ENCODE measurements at regions of chr20 and their contacts with region 1.

Region 1: GRCh38 chr20:8361006-8361652 is 229.1 kb downstream of the PLCB1 start:
- DNase-seq: no peak
- ATAC-seq: 0 out of 3 replicates have a peak, but pooled peaks have one; percentile 16
- H3K4me3 ChIP-seq: no peak overlapping the region
- H3K27ac ChIP-seq: no peak overlapping the region
- H3K4me1 ChIP-seq: peaks cover 35% of the 10 kb centered on the region
- H3K27me3 ChIP-seq: no peaks in the 10 kb centered on the region
- CTCF ChIP-seq: no peak
- EP300 ChIP-seq: no peak
- POLR2A ChIP-seq: no peak
- RAD21 ChIP-seq: no peak

Region 2: GRCh38 chr20:8139899-8140298 is 221.2 kb before region 1 on chr20:
- CTCF ChIA-PET with region 1: no interaction called
- POLR2A ChIA-PET with region 1: no interaction called
- in situ Hi-C with region 1: no loop called
- intact Hi-C with region 1: no loop called
- DNase-seq: no peak
- ATAC-seq: no peak
- H3K4me3 ChIP-seq: no peak overlapping the region
- H3K27ac ChIP-seq: no peak overlapping the region
- H3K4me1 ChIP-seq: peaks cover 55% of the 10 kb centered on the region
- H3K27me3 ChIP-seq: no peaks in the 10 kb centered on the region
- CTCF ChIP-seq: no peak
- EP300 ChIP-seq: no peak
- POLR2A ChIP-seq: no peak
- RAD21 ChIP-seq: no peak

Region 3: DNA sequence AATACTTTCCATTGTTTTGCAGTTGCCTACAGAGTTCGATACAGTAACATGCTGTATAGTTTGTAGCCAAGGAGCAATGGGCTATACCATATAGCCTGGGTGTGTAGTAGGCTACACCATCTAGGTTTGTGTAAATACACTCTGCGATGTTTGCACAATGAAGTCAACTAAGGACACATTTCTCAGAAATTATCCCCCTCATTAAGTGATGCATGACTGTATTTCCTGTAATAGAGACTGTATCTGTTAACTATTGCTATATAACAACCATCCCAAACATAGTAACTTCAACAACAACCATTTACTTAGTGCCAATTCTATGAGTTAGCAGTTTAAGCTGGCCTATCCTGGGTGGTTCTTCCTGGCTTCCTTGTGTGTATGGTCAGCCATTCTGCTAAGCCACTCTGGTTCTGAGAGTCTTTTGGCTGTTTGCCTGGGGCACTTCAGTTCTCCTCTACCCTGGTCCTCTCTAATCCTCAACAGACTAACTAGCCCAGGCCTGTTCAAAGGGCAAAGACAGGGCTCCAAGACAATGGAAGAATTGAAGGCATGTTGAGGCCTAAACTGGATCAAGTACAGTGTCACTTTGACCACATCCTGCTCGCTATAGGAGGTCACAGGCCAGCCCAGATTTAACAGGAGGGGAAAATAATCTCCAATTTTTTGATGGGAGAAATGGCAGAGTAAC is 105.0 kb before region 1 on chr20:
- CTCF ChIA-PET with region 1: no interaction called
- POLR2A ChIA-PET with region 1: no interaction called
- in situ Hi-C with region 1: no loop called
- intact Hi-C with region 1: loop called (anchors 10 kb)
- DNase-seq: peak; percentile 84
- ATAC-seq: peak; percentile 81
- H3K4me3 ChIP-seq: no peak overlapping the region
- H3K27ac ChIP-seq: peak overlapping the region; percentile 17
- H3K4me1 ChIP-seq: peaks cover 42% of the 10 kb centered on the region
- H3K27me3 ChIP-seq: no peaks in the 10 kb centered on the region
- CTCF ChIP-seq: no peak
- EP300 ChIP-seq: peak in 1 of 2 experiments; percentile 31; a peak in 1 of 4 replicates
- POLR2A ChIP-seq: no peak
- RAD21 ChIP-seq: no peak

Region 4: GRCh38 chr20:8331740-8332412 is 29.3 kb before region 1 on chr20:
- CTCF ChIA-PET with region 1: no interaction called
- POLR2A ChIA-PET with region 1: no interaction called
- in situ Hi-C with region 1: no loop called
- intact Hi-C with region 1: loop called (anchors 1 kb)
- DNase-seq: peak; percentile 86
- ATAC-seq: peak; percentile 60
- H3K4me3 ChIP-seq: peak overlapping the region in 2 of 3 experiments; percentile 1 to 44; a peak in 2 of 6 replicates
- H3K27ac ChIP-seq: peak overlapping the region; percentile 77
- H3K4me1 ChIP-seq: peaks cover 78% of the 10 kb centered on the region
- H3K27me3 ChIP-seq: no peaks in the 10 kb centered on the region
- CTCF ChIP-seq: no peak
- EP300 ChIP-seq: peak in 1 of 2 experiments; percentile 58; a peak in 2 of 4 replicates
- POLR2A ChIP-seq: no peak
- RAD21 ChIP-seq: peak; percentile 28; the same call in 1 of the 2 replicates

Measured in HepG2 (cell line).